Gastrocnemius medialis (tissue), 4 donors: ENCODE measurements at regions of chr7 and their contacts with region 1.

Region 1: GRCh38 chr7:1345796-1346755 is 113.2 kb downstream of the MICALL2 start:
- DNase-seq: no peak
- ATAC-seq: no peak
- H3K4me3 ChIP-seq: no peak overlapping the region
- H3K27ac ChIP-seq: no peak overlapping the region
- H3K4me1 ChIP-seq: no peaks in the 10 kb centered on the region
- H3K27me3 ChIP-seq: peaks cover 11 to 27% (median 26%) of the 10 kb centered on the region in 3 donors
- CTCF ChIP-seq: no peak
- POLR2A ChIP-seq: no peak

Region 2: DNA sequence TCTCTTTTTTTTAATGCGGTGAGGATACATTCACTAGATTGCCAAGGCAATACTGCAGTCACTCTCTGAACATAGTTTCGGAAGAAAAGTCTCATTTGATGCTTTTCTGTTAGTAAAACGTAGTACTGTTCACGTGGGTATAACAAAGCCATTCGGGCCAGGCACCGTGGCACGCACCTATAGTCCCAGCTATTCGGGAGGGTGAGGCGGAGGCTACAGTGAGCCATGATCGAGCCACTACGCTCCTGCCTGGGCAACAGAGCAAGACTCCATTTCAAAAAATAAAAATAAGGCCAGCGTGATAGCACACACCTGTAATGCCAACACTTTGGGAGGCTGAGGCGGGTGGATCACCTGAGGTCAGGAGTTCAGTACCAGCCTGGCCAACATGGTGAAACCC is 943.5 kb after region 1 on chr7:
- in situ Hi-C with region 1: no loop called
- intact Hi-C with region 1: loop called (anchors 5 kb)
- DNase-seq: no peak
- ATAC-seq: no peak
- H3K4me3 ChIP-seq: no peak overlapping the region
- H3K27ac ChIP-seq: no peak overlapping the region
- H3K4me1 ChIP-seq: no peaks in the 10 kb centered on the region
- H3K27me3 ChIP-seq: no peaks in the 10 kb centered on the region
- CTCF ChIP-seq: no peak
- POLR2A ChIP-seq: no peak